Activated T-helper 1 cell treated with anti-CD3 and anti-CD28 coated beads, Interleukin-12 subunit alpha, Interleukin-12 subunit beta, Interleukin-2, Interleukin-4 antibody, amounts not matched to agents 30 ng/mL and 10 ng/mL and 1 ng/mL, durations not matched to agents 14 hours and 24 hours and 36 hours (primary cell): ENCODE measurements at regions of chr9 and their contacts with region 1.

Region 1: GRCh38 chr9:128455849-128456612 is at the start of gene ODF2:
- DNase-seq: peak; percentile 98
- H3K4me3 Mint-ChIP-seq: peak within 1 kb of the TSS; percentile 93
- H3K27ac Mint-ChIP-seq: peak within 1 kb of the TSS; percentile 98
- H3K4me1 Mint-ChIP-seq: peaks cover 13% of the 10 kb centered on the region
- H3K27me3 Mint-ChIP-seq: peaks cover 3% of the 10 kb centered on the region
- total RNA-seq, gene ODF2: 55.6 and 57.6 TPM in 2 replicates

Region 2: DNA sequence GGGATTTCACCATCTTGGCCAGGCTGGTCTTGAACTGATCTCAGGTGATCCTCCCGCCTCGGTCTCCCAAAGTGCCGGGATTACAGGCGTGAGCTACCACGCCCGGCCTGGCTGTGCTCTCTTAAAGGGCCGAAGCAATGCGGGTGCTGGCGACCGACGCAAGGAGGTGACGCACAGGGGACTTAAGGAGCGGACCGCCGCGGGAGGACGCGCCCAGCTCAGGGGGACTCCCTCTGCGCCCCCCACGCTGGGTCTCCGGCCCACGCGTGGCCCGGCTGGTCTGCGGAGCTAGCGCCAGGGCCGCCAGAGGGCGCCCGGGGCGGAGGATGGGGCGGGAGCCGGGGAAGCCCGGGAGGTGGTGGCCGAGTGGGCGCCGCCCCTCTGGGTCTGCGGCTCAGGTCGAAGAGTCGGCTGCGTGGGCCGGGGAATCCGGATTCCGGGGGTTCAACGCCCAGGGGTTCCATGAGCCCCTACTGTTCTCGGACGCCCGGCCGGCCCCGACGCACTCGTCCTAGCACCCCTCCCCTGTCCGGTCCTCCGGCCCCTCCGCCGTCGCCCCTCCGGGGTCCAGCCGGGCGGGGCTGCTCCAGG is 35.9 kb before region 1 on chr9:
- intact Hi-C with region 1: loop called (anchors 1 kb)
- DNase-seq: peak; percentile 65
- H3K4me3 Mint-ChIP-seq: peak overlapping the region; percentile 78
- H3K27ac Mint-ChIP-seq: no peak overlapping the region
- H3K4me1 Mint-ChIP-seq: peaks cover 16% of the 10 kb centered on the region
- H3K27me3 Mint-ChIP-seq: peaks cover 45% of the 10 kb centered on the region

Region 3: GRCh38 chr9:128504485-128505413 is 48.7 kb after region 1 on chr9 and contains the start of gene GLE1:
- intact Hi-C with region 1: loop called (anchors 1 kb)
- DNase-seq: peak; percentile 97
- H3K4me3 Mint-ChIP-seq: peak within 1 kb of the TSS; percentile 99
- H3K27ac Mint-ChIP-seq: peak within 1 kb of the TSS; percentile 99
- H3K4me1 Mint-ChIP-seq: peaks cover 23% of the 10 kb centered on the region
- H3K27me3 Mint-ChIP-seq: no peaks in the 10 kb centered on the region
- total RNA-seq, gene GLE1: 51.4 and 52.0 TPM in 2 replicates